ENCODE measurements at regions of chrX and their contacts with region 1.

Region 1: DNA sequence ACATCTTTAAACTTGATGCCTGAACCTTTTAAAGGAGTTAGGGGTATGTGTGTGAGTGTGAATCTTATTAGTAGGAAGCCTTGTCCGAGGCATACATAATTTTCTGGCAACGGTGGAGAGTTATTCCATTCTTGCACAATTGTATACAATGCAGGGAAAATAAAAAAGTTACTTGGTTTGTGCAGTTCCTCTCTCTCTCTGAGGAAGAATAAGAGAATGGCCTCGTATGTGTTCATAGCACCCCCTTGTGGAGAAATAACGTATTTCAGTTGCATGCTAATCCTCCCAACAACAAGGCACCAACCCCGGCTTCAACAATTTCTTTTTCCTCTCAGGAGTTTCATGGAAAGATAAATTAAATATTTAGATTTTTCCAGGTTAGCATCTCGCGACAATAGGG is 33.7 kb upstream of the FGF13 start:
- DNase-seq: peak; percentile 6
- H3K4me3 Mint-ChIP-seq: no peak overlapping the region
- H3K27ac Mint-ChIP-seq: no peak overlapping the region
- H3K4me1 Mint-ChIP-seq: no peaks in the 10 kb centered on the region
- H3K27me3 Mint-ChIP-seq: peaks cover 10% of the 10 kb centered on the region

Region 2: DNA sequence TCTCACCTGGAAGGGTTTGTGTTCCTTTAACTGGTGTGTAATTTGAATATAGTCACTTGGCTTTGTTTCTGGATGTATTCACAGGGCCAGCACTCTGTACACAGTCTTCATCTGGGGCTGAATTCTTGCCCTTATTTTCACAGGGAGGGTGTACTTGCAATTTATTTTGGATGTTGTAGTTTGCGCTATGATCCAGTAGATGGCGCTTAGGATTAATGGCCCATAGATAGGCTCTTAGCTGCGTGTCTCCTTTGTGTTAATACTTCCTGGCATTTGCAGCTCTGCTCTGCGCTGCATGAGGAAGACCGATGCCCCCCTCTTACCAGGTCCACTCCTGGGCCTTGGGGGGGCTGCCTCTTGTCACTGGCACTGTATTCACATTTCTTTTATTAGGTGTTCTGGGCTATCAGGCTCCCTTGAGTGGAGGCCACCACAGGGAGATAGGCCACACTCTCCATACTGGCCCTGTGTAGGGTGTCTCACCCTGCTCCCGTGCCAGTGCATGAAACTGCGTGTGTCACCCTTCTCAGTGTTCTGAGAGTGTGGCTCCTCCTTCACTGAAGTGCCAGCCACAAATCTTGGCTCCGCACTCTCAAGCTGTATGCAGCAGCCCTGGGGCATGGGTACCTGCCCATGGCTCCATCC is 617.0 kb before region 1 on chrX:
- CTCF ChIA-PET with region 1: interaction called, 5 read pairs
- intact Hi-C with region 1: loop called (anchors 1 kb)
- DNase-seq: peak; percentile 10
- H3K4me3 Mint-ChIP-seq: no peak overlapping the region
- H3K27ac Mint-ChIP-seq: no peak overlapping the region
- H3K4me1 Mint-ChIP-seq: no peaks in the 10 kb centered on the region
- H3K27me3 Mint-ChIP-seq: peaks cover 2% of the 10 kb centered on the region

Region 3: DNA sequence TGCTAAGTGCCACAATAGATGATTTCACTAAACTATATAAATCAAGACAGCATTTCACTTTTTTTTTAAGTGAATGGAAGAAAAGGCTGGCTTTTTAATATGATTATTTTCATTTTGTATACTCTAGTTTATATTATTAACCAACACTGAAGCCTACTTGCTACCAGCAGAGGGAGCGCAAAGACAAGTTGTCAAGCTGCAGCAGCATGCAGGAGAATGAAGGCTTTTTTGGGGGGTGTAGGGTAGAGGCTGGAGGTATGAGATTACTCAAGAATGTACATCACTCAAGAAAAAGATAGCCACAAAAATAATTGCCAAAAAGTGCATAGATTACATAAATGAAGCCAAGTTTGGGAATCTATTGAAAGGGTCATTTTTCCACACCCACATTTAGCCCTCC is 553.2 kb before region 1 on chrX:
- CTCF ChIA-PET with region 1: no interaction called
- intact Hi-C with region 1: loop called (anchors 1 kb)
- DNase-seq: peak; percentile 19
- H3K4me3 Mint-ChIP-seq: no peak overlapping the region
- H3K27ac Mint-ChIP-seq: no peak overlapping the region
- H3K4me1 Mint-ChIP-seq: no peaks in the 10 kb centered on the region
- H3K27me3 Mint-ChIP-seq: no peaks in the 10 kb centered on the region

Region 4: DNA sequence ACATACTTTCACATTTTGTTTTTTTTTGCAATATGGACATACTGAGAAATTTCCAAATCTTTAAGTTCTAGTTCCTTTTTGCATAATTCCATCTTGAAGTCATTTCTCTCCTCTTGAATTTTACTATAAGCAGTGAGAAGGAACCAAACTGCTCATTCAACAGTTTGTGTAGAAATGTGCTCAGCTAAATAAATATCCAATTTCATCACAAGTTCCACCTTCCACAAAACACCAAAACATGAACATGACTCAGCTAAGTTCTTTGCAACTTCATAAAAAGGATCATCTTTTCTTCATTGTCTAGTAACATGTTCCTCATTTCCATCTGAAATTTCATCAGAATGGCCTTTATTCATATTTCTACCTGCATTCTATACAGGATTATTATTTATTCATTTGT is 43.6 kb after region 1 on chrX:
- CTCF ChIA-PET with region 1: no interaction called
- intact Hi-C with region 1: no loop called
- DNase-seq: no peak
- H3K4me3 Mint-ChIP-seq: no peak overlapping the region
- H3K27ac Mint-ChIP-seq: no peak overlapping the region
- H3K4me1 Mint-ChIP-seq: no peaks in the 10 kb centered on the region
- H3K27me3 Mint-ChIP-seq: no peaks in the 10 kb centered on the region

Region 5: GRCh38 chrX:138986235-138986634 is 241.0 kb after region 1 on chrX:
- CTCF ChIA-PET with region 1: no interaction called
- intact Hi-C with region 1: no loop called
- DNase-seq: no peak
- H3K4me3 Mint-ChIP-seq: no peak overlapping the region
- H3K27ac Mint-ChIP-seq: no peak overlapping the region
- H3K4me1 Mint-ChIP-seq: no peaks in the 10 kb centered on the region
- H3K27me3 Mint-ChIP-seq: no peaks in the 10 kb centered on the region

Measured in activated naive CD4-positive, alpha-beta T cell treated with anti-CD3 and anti-CD28 coated beads for 36 hours (primary cell).